ENCODE measurements at regions of chr5 and their contacts with region 1.

Region 1: GRCh38 chr5:107571621-107572536 is 98.9 kb downstream of the EFNA5 start:
- DNase-seq: peak; percentile 90
- ATAC-seq: peak; percentile 88 to 94 (median 93)
- H3K4me3 ChIP-seq: peak overlapping the region; percentile 40
- H3K4me3 Mint-ChIP-seq: peak overlapping the region; percentile 80
- H3K27ac ChIP-seq: peak overlapping the region; percentile 72
- H3K27ac Mint-ChIP-seq: peak overlapping the region; percentile 88 to 90
- H3K4me1 ChIP-seq: peaks cover 20% of the 10 kb centered on the region
- H3K4me1 Mint-ChIP-seq: peaks cover 17 to 25% of the 10 kb centered on the region in 2 donors
- H3K27me3 ChIP-seq: no peaks in the 10 kb centered on the region
- H3K27me3 Mint-ChIP-seq: peaks cover 0 to 2% of the 10 kb centered on the region in 2 donors
- CTCF ChIP-seq: peak; percentile 95

Region 2: GRCh38 chr5:107248066-107248695 is 323.7 kb before region 1 on chr5:
- intact Hi-C with region 1: loop called (anchors 5 kb)
- DNase-seq: peak; percentile 29 to 61
- ATAC-seq: peak; percentile 50 to 70 (median 66)
- H3K4me3 ChIP-seq: no peak overlapping the region
- H3K4me3 Mint-ChIP-seq: no peak overlapping the region
- H3K27ac ChIP-seq: no peak overlapping the region
- H3K27ac Mint-ChIP-seq: no peak overlapping the region
- H3K4me1 ChIP-seq: peaks cover under 1% of the 10 kb centered on the region
- H3K4me1 Mint-ChIP-seq: peaks cover 0 to 9% of the 10 kb centered on the region in 2 donors
- H3K27me3 ChIP-seq: no peaks in the 10 kb centered on the region
- H3K27me3 Mint-ChIP-seq: peaks cover 5 to 7% of the 10 kb centered on the region in 2 donors
- CTCF ChIP-seq: peak; percentile 80

Region 3: DNA sequence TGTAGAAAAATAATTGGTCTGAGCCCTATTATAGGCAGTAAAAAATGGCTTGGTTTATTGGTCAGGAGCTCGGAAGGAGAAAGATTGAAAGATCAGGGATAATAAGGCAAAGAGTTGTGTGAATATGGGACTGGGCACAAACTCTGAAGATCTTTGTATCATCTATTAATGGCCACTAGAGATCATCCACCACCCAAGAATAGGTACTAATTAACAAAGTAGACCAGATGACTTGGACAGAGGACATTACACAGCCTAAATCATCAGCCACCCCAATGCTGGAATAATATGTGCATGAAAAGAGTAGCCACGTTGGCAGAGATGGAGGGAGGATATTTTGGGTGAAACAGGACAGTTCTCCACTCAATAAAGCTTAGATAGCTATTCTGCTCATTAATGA is 265.3 kb before region 1 on chr5:
- intact Hi-C with region 1: loop called (anchors 5 kb)
- DNase-seq: no peak
- ATAC-seq: peak in 1 of 3 donors; percentile 40
- H3K4me3 ChIP-seq: no peak overlapping the region
- H3K4me3 Mint-ChIP-seq: no peak overlapping the region
- H3K27ac ChIP-seq: no peak overlapping the region
- H3K27ac Mint-ChIP-seq: no peak overlapping the region
- H3K4me1 ChIP-seq: no peaks in the 10 kb centered on the region
- H3K4me1 Mint-ChIP-seq: no peaks in the 10 kb centered on the region
- H3K27me3 ChIP-seq: no peaks in the 10 kb centered on the region
- H3K27me3 Mint-ChIP-seq: no peaks in the 10 kb centered on the region
- CTCF ChIP-seq: no peak

Region 4: DNA sequence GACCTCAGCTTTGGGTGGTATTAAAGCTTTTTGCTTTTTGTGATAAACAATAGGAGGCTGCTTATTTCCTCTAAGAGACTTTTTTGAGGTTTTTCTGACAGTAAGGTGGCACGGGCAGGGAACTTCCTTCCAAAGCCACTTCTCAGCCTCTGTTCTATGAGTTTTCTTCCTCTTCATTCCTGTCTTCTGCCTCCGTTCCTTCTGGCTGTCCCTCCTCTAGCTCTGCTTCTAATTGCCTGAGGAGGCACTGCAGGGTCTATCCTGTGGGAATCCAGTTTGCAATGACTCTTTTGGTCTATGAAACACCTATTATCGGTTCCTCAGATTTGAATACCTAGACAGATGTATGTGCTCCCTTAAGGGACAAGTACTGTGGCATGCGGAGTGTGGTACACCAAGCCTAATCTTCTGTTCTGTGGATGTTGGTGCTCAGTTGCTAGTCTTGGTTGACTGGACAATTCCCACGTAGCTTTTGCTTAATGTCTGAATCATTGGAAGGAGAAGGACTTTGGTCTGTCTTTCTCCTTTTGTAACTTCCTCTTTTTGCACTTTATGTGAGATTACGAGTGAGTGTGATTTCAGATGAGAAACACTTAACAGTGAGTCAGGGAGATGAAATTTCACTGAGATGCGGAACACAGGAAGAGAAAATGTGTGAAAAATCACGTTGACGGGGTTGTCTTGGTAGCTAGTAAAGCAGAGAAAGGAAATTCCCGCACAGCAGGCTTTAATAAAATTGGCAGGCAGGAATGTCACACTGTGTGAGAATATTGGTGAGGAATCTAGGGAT is 206.4 kb before region 1 on chr5:
- intact Hi-C with region 1: loop called (anchors 5 kb)
- DNase-seq: peak; percentile 21 to 45
- ATAC-seq: peak; percentile 78 to 87 (median 83)
- H3K4me3 ChIP-seq: no peak overlapping the region
- H3K4me3 Mint-ChIP-seq: peak overlapping the region; percentile 72
- H3K27ac ChIP-seq: peak overlapping the region; percentile 74
- H3K27ac Mint-ChIP-seq: peak overlapping the region; percentile 78 to 88
- H3K4me1 ChIP-seq: peaks cover 11% of the 10 kb centered on the region
- H3K4me1 Mint-ChIP-seq: peaks cover 31 to 40% of the 10 kb centered on the region in 2 donors
- H3K27me3 ChIP-seq: no peaks in the 10 kb centered on the region
- H3K27me3 Mint-ChIP-seq: no peaks in the 10 kb centered on the region
- CTCF ChIP-seq: no peak

Measured in natural killer cell (primary cell).